ENCODE measurements at regions of chr12 and their contacts with region 1.

Region 1: GRCh38 chr12:116599285-116600136 is 40.3 kb downstream of the MAP1LC3B2 start:
- DNase-seq: peak; percentile 84 to 86
- ATAC-seq: peak; percentile 85 to 96 (median 91)
- H3K4me3 ChIP-seq: peak overlapping the region in 9 of 10 donors; percentile 5 to 50 (median 39)
- H3K27ac ChIP-seq: peak overlapping the region; percentile 46 to 90 (median 82)
- H3K4me1 ChIP-seq: peaks cover 6 to 42% (median 22%) of the 10 kb centered on the region in 9 donors
- H3K27me3 ChIP-seq: no peaks in the 10 kb centered on the region
- CTCF ChIP-seq: peak; percentile 46 to 82 (median 74)

Region 2: DNA sequence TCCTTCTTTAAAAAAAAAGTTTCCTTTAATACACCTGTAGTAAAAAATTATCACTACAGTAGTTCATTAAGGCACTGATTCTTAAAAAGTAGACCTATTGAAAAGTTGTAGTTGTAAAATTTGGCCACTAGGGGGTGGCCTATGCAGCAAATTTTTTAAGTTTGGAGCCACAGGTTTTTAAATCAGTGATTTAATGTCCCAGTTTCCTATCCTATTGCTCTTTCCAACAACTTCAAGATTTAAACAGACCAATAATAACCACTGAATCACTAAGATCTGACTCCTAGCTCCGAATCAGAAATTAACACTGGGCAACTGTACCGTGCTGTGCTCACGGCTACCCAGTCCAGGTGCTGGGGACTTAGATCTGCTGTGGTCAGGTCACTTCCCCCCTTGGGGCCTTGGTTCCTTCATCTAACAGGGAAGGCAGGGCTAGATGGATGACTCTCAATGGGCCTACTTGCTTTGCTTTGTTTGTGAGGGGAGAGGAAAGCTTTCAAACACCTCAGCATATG is 601.3 kb before region 1 on chr12:
- intact Hi-C with region 1: loop called in 8 of 10 experiments (anchors 5 to 10 kb)
- DNase-seq: no peak
- ATAC-seq: peak in 5 of 8 donors; percentile 26 to 56 (median 46)
- H3K4me3 ChIP-seq: no peak overlapping the region
- H3K27ac ChIP-seq: no peak overlapping the region
- H3K4me1 ChIP-seq: peaks cover 0 to 9% (median 4%) of the 10 kb centered on the region in 9 donors
- H3K27me3 ChIP-seq: no peaks in the 10 kb centered on the region
- CTCF ChIP-seq: peak; percentile 79 to 91 (median 87)

Region 3: DNA sequence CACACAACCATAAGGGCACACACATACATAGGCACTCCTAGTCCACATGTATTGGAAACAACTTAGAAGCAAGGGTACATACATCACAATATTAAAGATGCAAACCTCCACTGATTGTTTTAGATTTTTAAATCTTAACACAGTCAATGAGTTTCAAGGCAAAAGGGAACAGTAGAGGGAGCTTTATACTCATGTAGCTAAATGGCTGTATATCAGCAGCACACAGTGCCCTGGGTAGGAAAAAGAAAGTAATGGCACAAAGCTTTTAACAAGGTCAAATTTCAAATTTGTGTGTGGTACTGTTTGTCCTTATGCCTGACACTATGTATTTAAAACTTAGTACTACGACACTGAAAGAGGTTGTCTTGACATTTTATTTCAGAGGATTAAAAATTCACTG is 584.0 kb before region 1 on chr12:
- intact Hi-C with region 1: loop called in 5 of 10 experiments (anchors 5 to 10 kb)
- DNase-seq: no peak
- ATAC-seq: peak in 7 of 8 donors; percentile 47 to 88 (median 81)
- H3K4me3 ChIP-seq: no peak overlapping the region
- H3K27ac ChIP-seq: no peak overlapping the region
- H3K4me1 ChIP-seq: peaks cover 0 to 39% (median 11%) of the 10 kb centered on the region in 9 donors
- H3K27me3 ChIP-seq: no peaks in the 10 kb centered on the region
- CTCF ChIP-seq: peak; percentile 20 to 82 (median 60)

Region 4: DNA sequence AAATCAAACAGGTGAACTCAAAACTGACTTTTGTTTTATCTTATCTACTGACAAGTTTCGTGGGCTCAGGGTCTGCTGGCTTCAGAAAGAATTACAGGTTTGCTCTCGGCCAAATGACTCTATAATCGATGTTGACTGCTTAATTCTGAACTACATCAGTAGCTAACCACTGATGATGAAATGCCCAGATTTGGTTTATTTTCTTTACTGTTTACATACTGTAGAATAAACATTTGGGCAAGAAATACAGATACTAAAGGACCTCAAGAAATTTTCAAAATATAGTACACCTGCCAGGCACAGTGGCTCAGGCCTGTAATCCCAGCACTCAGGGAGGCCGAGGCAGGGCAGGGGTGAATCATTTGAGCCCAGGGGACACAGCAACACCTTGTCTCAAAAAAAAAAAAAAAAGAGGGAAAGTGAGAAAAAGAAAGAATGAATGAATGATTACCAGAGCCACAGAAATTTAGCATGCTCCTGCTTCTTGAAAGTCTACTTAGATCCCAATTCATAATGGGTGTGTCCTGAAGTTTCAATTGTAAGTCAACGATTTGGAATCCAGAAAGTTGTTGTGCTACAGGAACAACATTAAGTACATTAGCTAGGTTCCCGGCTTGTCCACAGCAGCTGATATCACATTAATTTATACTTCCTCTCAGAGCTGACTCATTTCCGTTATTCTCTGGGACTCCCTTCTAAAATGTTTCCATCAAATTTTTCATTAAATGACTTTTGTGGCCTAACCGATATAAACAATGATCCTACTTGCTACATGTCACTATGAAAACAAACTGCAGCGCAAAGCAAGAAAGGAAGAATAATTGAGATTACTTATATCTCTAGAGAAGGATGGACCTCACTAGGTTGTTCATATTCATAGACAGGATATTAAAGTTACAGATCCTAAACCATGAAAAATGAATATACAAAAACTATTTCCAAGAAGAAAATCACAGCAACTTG is 456.3 kb before region 1 on chr12:
- intact Hi-C with region 1: loop called in 3 of 10 experiments (anchors 5 to 10 kb)
- DNase-seq: no peak
- ATAC-seq: peak in 3 of 8 donors; percentile 21 to 43 (median 40)
- H3K4me3 ChIP-seq: no peak overlapping the region
- H3K27ac ChIP-seq: peak overlapping the region in 8 of 10 donors; percentile 5 to 59 (median 34)
- H3K4me1 ChIP-seq: peaks cover 0 to 89% (median 66%) of the 10 kb centered on the region in 9 donors
- H3K27me3 ChIP-seq: no peaks in the 10 kb centered on the region
- CTCF ChIP-seq: no peak

Region 5: DNA sequence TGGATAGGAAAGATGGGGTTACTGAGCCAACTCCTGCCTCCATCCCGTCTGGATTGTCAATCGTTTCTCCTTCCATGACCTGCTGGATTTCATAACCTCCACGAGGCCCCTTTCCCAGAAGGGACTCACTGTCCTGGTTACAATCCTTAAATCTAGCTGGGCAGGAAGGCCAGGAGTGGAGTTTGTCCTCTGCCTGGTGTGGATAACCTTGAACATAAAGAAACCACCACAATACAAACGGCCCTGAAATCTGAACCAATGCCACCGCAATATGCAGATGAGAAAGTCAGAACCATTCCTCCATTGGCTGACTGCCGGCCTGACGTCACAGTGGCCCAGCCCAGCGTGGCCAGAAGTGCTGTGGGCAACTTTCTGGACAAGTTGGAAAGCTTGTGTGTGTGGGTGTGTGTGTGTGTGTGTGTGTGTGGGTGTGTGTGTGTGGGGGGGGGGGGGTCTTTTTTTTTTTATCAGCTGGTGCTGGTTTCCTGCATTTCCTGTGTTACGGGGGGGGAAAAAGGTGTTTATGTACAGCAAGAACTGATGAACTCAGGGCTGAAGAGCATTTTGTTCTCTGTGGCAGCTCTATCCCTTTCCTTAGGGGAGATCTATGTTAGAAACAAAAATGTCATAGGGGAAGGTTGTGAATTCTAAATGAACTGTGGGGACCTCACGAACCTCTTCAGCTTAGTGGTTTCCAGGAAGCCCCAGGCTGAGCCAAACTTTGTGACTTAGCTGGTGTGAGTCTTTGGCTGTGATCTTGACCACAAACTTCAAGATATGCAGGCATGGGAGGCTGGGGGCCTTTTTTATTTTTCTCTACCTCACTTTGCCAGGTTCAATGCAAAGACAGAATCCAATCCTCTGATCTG is 240.4 kb before region 1 on chr12:
- intact Hi-C with region 1: loop called in 1 of 10 experiments (anchors 10 kb)
- DNase-seq: peak; percentile 90 to 93
- ATAC-seq: peak; percentile 92 to 99 (median 96)
- H3K4me3 ChIP-seq: peak overlapping the region in 4 of 10 donors; percentile 17 to 30 (median 22)
- H3K27ac ChIP-seq: peak overlapping the region; percentile 47 to 76 (median 70)
- H3K4me1 ChIP-seq: peaks cover 0 to 26% (median 8%) of the 10 kb centered on the region in 9 donors
- H3K27me3 ChIP-seq: no peaks in the 10 kb centered on the region
- CTCF ChIP-seq: no peak

Region 6: DNA sequence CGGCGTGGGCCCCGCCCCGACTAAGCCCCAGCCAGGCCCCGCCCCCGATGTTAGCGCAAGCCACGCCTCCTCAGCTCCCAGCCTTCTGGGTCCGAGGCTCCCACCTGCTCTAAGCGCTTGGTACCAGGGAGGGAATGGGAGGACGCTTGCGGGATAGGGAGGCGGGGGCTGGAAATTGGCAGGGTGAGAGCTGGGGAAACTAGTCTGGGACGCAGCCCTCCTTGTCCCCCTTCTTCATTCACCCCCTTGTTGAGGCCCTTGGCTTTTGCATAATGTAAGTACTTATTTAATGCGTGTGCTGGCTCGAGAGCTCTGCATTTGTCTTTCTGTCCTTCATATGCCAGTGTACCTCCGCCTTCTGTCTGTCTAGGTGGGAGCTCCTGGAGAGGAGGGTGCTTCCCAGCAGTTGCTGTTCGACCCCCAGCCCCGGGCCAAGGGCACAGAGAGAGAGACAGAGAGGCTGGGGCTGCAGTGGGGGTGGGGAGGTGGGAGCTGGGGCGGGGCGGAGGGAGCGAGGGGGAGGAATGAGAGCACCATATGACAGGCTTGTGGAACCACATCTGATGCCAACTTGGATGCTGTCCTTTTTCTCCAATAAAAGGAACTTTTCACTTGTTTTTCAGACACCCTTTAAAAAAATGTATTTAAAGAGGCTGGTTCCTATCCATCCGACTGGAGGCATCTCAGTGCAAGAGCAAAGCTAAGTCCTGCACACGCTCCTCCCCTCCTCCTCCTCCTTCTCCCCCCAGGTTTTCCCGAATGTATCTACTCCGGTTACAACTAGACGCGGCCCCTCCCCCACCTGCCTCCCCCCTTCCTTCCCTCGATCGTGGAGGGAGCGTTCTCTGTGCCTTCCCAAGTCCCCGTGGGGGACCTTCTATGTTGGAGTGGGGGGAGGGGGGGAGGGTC is 65.9 kb before region 1 on chr12:
- intact Hi-C with region 1: loop called in 1 of 10 experiments (anchors 5 kb)
- DNase-seq: peak; percentile 67 to 79
- ATAC-seq: peak; percentile 77 to 91 (median 87)
- H3K4me3 ChIP-seq: peak overlapping the region; percentile 25 to 64 (median 56)
- H3K27ac ChIP-seq: peak overlapping the region in 4 of 10 donors; percentile 34 to 71 (median 36)
- H3K4me1 ChIP-seq: peaks cover 0 to 38% (median 20%) of the 10 kb centered on the region in 9 donors
- H3K27me3 ChIP-seq: peaks cover 0 to 28% (median 0%) of the 10 kb centered on the region in 7 donors
- CTCF ChIP-seq: no peak

Measured in heart right ventricle (tissue), 16 donors.